ENCODE measurements at regions of chr3 and their contacts with region 1.

Region 1: GRCh38 chr3:45119824-45120614 is 26.2 kb downstream of the CDCP1 start:
- DNase-seq: no peak
- ATAC-seq: no peak
- H3K4me3 ChIP-seq: no peak overlapping the region
- H3K4me3 Mint-ChIP-seq: no peak overlapping the region
- H3K27ac ChIP-seq: no peak overlapping the region
- H3K27ac Mint-ChIP-seq: no peak overlapping the region
- H3K4me1 ChIP-seq: peaks cover 21% of the 10 kb centered on the region
- H3K4me1 Mint-ChIP-seq: peaks cover 31% of the 10 kb centered on the region
- H3K27me3 ChIP-seq: no peaks in the 10 kb centered on the region
- H3K27me3 Mint-ChIP-seq: no peaks in the 10 kb centered on the region
- CTCF ChIP-seq: no peak

Region 2: DNA sequence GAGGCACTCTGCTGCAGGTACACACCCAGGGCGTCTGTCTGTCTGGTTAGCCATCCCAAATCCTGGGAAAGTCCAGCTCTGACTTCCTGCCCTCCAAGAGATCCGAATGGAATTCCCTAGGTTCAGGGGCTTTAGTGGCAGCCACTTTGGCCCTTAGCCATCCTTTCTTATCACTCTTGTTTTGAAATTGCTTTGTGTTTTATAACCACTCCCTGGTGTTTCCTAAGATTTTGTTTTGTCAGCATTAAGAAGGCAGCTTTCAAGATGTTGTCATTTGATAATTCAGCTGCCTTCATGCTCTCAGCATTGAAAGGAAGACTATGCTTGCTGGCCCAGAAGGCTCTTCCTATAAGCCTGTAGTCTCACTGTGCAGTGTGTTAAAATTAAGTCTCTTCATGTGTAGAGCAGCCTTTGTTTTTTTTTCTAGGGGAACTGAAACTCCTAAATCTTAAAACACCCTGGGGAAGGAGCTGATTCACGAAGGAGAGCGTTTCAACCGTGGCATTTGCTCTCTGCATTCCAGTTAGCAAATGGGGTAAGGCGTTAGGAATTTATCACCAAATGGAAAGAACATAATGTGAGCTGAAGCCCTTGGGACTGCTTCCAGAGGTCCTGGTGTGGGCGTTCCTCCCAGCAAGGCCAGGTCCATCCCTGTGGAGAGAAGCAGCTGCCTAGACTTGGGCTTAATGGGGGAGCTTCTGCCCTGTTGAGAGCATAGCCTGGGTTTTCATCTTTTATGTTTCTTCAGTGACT is 108.1 kb before region 1 on chr3:
- CTCF ChIA-PET with region 1: no interaction called
- POLR2A ChIA-PET with region 1: no interaction called
- intact Hi-C with region 1: no loop called
- DNase-seq: peak in 1 of 14 experiments; percentile 35
- ATAC-seq: no peak
- H3K4me3 ChIP-seq: no peak overlapping the region
- H3K4me3 Mint-ChIP-seq: no peak overlapping the region
- H3K27ac ChIP-seq: peak overlapping the region in 1 of 2 donors; percentile 18
- H3K27ac Mint-ChIP-seq: peak overlapping the region; percentile 34
- H3K4me1 ChIP-seq: peaks cover 36% of the 10 kb centered on the region
- H3K4me1 Mint-ChIP-seq: peaks cover 20% of the 10 kb centered on the region
- H3K27me3 ChIP-seq: peaks cover 0 to 2% of the 10 kb centered on the region in 2 experiments
- H3K27me3 Mint-ChIP-seq: no peaks in the 10 kb centered on the region
- CTCF ChIP-seq: no peak

Region 3: DNA sequence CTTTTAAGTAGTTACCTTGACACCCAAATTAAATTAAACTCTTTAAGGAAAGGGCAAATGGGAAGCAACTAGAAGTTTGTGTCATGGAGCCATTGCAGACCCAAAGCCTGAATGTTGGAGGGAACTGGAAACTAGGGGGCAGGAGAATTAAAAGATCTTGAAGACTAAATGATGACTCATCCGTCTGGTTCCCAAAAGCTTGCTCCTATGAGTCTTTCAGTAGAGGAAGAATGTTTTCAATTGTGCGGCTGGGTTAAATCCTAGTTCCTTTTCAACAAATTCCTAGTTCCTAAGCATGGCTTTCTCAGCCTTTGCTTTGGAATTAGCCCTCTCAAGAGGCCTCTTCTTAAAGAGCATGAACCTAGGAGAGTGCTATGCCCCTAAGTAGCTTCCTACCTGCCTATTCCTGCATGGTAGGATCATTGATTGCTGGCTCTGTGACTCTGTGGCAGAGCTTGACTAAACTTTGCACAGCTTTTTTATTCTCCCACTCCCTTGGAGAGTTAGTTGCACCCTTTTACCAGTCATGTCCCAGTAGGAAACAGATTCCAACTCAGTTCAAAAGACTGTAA is 76.2 kb before region 1 on chr3:
- CTCF ChIA-PET with region 1: interaction called, 5 read pairs
- POLR2A ChIA-PET with region 1: no interaction called
- intact Hi-C with region 1: loop called in 1 of 2 experiments (anchors 5 kb)
- DNase-seq: peak in 2 of 14 experiments; percentile 43 to 51
- ATAC-seq: no peak
- H3K4me3 ChIP-seq: no peak overlapping the region
- H3K4me3 Mint-ChIP-seq: no peak overlapping the region
- H3K27ac ChIP-seq: no peak overlapping the region
- H3K27ac Mint-ChIP-seq: no peak overlapping the region
- H3K4me1 ChIP-seq: peaks cover 17% of the 10 kb centered on the region
- H3K4me1 Mint-ChIP-seq: peaks cover 21% of the 10 kb centered on the region
- H3K27me3 ChIP-seq: peaks cover 0 to 7% of the 10 kb centered on the region in 2 experiments
- H3K27me3 Mint-ChIP-seq: no peaks in the 10 kb centered on the region
- CTCF ChIP-seq: no peak

Region 4: DNA sequence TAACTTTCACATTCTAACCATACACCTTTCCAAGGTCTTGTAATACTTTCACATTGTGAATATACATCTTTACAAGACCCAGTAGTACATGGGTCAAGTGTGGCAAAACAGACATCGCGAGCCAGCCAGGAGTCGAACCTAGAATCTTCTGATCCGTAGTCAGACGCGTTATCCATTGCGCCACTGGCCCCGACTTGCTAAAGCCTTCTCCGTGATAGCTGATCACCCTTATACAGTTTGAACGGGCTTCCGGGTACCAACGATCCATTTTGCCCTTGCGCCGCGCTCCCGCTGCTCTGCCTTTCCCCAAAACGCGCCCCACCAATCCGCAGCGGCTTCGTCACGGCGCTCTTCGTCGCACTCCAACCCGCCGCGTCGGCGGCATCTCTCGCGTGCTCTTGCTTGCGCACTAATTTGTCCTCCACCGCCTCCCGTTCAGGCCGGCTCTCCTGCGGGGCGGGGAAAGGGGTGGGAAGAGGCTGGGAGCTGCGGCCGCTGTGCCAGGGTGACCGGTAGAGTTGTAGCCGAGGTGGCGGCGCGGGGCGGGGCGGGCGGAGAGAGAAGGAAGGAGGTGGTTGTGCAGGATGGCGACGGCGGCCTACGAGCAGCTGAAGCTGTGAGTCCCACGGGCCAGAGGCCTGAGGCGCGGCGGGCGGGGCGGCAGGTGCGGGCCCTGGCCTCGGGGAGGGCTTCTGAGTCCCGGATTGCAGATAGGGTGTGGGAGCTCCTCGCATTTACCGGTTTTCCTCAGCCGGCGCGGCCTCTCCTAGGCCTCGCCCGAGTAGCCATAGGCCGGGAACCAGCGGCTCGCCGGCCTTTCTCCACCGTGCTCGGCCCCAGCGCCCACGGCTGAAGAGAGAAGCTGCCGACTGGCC is 569.1 kb after region 1 on chr3 and contains the start of gene SACM1L:
- CTCF ChIA-PET with region 1: no interaction called
- POLR2A ChIA-PET with region 1: no interaction called
- intact Hi-C with region 1: no loop called
- DNase-seq: peak; percentile 88 to 99 (median 93)
- ATAC-seq: peak; percentile 85
- H3K4me3 ChIP-seq: peak within 1 kb of the TSS; percentile 81
- H3K4me3 Mint-ChIP-seq: peak within 1 kb of the TSS; percentile 94
- H3K27ac ChIP-seq: peak within 1 kb of the TSS; percentile 90 to 91
- H3K27ac Mint-ChIP-seq: peak within 1 kb of the TSS; percentile 99
- H3K4me1 ChIP-seq: peaks cover 39% of the 10 kb centered on the region
- H3K4me1 Mint-ChIP-seq: peaks cover 69% of the 10 kb centered on the region
- H3K27me3 ChIP-seq: no peaks in the 10 kb centered on the region
- H3K27me3 Mint-ChIP-seq: peaks cover 7% of the 10 kb centered on the region
- CTCF ChIP-seq: no peak
- total RNA-seq, gene SACM1L: 41.9 to 44.3 TPM

Measured in CD4-positive, alpha-beta T cell (primary cell).